GM12878 (cell line): ENCODE measurements at regions of chr12 and their contacts with region 1.

Region 1: DNA sequence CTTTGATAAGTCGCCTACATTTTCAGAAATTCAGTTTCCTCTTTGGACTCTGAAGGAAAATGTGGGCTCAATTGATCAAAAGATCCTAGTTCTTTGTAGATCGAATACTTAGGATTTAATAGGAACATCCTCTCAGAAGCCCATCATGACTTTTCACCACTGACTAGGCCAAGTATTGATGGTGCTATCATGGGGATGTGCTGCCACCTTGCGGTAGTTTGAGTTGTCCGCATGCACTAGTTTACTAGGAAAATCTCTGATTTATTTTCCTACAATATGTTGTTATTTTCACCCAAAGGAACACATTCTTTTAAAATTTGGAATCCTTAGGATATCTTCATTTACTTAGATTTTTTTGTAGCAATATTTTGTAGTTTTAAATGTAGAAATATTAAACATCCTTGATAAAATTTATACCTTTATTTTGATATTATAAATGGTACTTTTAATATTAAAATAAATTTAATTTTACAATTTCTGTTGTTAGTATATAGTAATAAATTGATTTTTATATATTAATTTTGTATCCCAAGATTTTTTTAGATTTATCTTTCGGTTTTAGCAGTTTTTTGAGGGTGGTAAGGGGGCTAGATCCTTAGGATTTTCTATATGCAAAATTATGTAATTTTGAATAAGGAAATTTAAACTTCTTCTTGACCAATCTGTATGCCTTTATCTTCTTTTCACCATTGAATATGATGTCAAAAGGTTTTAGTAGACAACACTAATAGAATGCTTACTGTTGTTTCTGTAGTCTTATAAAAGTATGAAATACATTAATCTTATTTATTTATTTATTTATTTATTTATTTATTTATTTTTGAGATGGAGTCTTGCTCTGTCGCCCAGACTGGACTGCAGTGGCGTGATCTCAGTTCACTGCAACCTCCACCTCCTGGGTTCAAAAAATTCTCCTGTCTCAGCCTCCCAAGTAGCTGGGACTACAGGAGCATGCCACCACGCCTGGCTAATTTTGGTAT is 52.9 kb upstream of the OR9K2 start:
- DNase-seq: peak; percentile 20
- ATAC-seq: peak; percentile 88
- H3K4me3 ChIP-seq: no peak overlapping the region
- H3K27ac ChIP-seq: no peak overlapping the region
- H3K4me1 ChIP-seq: no peaks in the 10 kb centered on the region
- H3K27me3 ChIP-seq: no peaks in the 10 kb centered on the region
- CTCF ChIP-seq: peak; percentile 72 to 91 (median 73)
- EP300 ChIP-seq: no peak
- POLR2A ChIP-seq: no peak
- RAD21 ChIP-seq: peak; percentile 97

Region 2: DNA sequence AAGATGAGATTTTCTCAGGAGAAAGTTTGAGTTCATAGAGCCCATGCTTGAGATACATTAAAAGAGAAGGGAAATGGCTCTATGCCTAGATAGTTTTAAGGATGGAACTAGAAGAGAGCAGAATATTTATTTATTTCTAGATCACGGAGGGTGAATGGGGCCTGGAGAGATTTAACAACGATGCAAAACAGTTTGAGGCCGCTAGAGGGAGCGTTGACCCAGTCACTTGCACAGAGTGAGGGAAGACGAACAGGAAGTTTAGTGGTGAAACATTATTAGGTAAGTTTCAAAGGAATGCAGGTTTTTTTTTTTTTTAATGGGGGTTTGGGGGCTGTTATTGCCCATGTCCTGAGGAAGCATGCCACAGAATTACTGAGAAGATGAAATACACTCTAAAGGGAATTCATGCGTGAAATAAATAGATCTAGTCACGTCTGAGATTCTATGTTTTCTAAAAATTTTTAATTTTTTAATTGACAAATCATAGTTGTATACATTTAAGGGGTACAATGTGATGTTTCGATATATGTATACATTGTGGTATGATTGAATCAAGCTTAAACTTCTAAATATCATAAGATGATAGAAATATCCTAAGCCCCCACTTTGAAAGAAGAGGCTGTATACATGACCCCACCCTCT is 470.0 kb before region 1 on chr12:
- CTCF ChIA-PET with region 1: interaction called, 5 read pairs
- POLR2A ChIA-PET with region 1: no interaction called
- RAD21 ChIA-PET with region 1: interaction called, 4 read pairs
- SMC1A ChIA-PET with region 1: interaction called, 3 read pairs
- in situ Hi-C with region 1: no loop called
- intact Hi-C with region 1: loop called (anchors 2 kb)
- DNase-seq: peak; percentile 21
- ATAC-seq: peak; percentile 99
- H3K4me3 ChIP-seq: no peak overlapping the region
- H3K27ac ChIP-seq: no peak overlapping the region
- H3K4me1 ChIP-seq: no peaks in the 10 kb centered on the region
- H3K27me3 ChIP-seq: no peaks in the 10 kb centered on the region; a peak in 1 of 4 replicates
- CTCF ChIP-seq: peak; percentile 81 to 92 (median 84)
- EP300 ChIP-seq: no peak
- POLR2A ChIP-seq: no peak
- RAD21 ChIP-seq: peak; percentile 78

Region 3: DNA sequence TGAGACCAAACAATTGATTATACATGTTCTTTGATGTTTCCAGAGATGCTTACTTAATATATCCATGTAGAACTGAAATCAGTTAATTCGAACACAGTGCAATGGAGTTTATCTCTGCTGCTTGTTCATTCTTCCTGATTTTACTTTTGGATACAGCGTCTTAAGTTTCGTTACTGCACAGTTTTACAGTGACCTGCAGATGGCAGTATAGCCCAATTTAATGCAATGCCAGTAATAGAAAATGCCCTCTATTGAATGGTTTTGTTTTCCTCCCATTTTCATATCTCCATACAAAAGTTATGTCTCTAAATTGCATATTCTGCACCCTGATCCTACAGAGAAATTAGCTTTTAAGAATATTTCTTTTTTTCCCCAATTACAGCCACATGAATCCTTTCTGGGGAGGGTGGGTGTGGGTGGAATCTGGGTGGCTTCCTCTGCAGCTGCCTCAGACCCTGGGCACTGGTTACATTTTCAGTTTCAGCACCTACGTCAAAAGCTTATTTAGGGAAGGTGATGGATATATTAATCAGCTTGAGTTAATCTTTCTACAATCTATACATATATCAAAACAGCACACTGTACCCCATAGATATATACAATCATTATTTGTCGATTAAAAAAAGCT is 324.0 kb before region 1 on chr12:
- CTCF ChIA-PET with region 1: interaction called, 135 read pairs
- POLR2A ChIA-PET with region 1: interaction called, 3 read pairs
- RAD21 ChIA-PET with region 1: interaction called, 34 read pairs
- SMC1A ChIA-PET with region 1: interaction called, 54 read pairs
- in situ Hi-C with region 1: no loop called
- intact Hi-C with region 1: loop called (anchors 1 kb)
- DNase-seq: peak; percentile 5
- ATAC-seq: peak; percentile 88
- H3K4me3 ChIP-seq: no peak overlapping the region
- H3K27ac ChIP-seq: no peak overlapping the region
- H3K4me1 ChIP-seq: no peaks in the 10 kb centered on the region
- H3K27me3 ChIP-seq: no peaks in the 10 kb centered on the region
- CTCF ChIP-seq: peak; percentile 62 to 86 (median 75)
- EP300 ChIP-seq: no peak
- POLR2A ChIP-seq: no peak
- RAD21 ChIP-seq: peak; percentile 84

Region 4: GRCh38 chr12:54853995-54854566 is 219.3 kb before region 1 on chr12 and contains the start of gene MUCL1:
- CTCF ChIA-PET with region 1: interaction called, 35 read pairs
- POLR2A ChIA-PET with region 1: no interaction called
- RAD21 ChIA-PET with region 1: interaction called, 14 read pairs
- SMC1A ChIA-PET with region 1: interaction called, 15 read pairs
- in situ Hi-C with region 1: loop called (anchors 5 kb)
- intact Hi-C with region 1: loop called (anchors 1 kb)
- DNase-seq: peak; percentile 28
- ATAC-seq: peak; percentile 100
- H3K4me3 ChIP-seq: no peak within 1 kb of the TSS
- H3K27ac ChIP-seq: no peak within 1 kb of the TSS
- H3K4me1 ChIP-seq: no peaks in the 10 kb centered on the region
- H3K27me3 ChIP-seq: no peaks in the 10 kb centered on the region
- CTCF ChIP-seq: peak; percentile 83 to 92 (median 89); a peak in 5 of 6 replicates
- EP300 ChIP-seq: no peak
- POLR2A ChIP-seq: no peak
- RAD21 ChIP-seq: peak; percentile 93
- polyA plus RNA-seq, gene MUCL1: not detected

Region 5: DNA sequence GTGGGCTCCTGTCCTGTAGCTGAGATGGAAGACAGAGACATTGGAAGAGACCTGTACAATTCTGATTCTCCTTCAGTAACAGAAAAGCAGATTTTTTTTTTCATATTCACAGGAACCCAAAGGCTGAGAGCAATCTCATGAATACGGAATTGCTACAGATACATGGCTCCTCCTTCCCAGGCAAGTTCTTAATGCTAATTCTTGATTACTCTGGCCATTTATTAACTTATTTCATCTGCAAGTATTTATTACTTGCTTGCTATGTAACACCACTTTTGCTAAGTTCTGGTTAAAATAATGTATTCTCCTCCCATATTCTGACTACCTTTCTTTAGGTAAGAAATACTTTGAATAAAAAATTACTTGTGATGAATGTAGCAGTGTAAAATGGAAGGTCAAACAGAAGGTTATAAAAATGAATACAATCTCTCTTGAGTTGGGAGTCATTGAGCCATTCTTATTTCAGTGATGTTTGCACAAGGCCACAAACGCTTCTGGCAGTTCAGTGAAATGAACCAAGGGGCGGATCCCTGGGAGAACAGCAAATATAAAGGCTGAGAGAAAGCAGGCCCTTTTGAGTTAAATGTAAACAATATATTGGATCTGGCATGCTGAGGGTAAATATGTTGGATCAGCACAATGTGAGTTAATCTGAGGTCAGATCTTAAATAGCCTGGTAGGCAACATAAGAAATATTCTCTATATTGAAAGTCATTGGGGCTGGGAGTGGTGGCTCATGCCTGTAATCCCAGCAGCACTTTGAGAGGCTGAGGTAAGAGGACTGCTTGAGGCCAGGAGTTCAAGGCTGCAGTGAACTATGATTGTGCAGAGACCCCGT is 181.4 kb before region 1 on chr12:
- CTCF ChIA-PET with region 1: no interaction called
- POLR2A ChIA-PET with region 1: no interaction called
- RAD21 ChIA-PET with region 1: no interaction called
- SMC1A ChIA-PET with region 1: no interaction called
- in situ Hi-C with region 1: no loop called
- intact Hi-C with region 1: no loop called
- DNase-seq: no peak
- ATAC-seq: no peak
- H3K4me3 ChIP-seq: no peak overlapping the region
- H3K27ac ChIP-seq: no peak overlapping the region
- H3K4me1 ChIP-seq: no peaks in the 10 kb centered on the region
- H3K27me3 ChIP-seq: no peaks in the 10 kb centered on the region
- CTCF ChIP-seq: no peak
- EP300 ChIP-seq: no peak
- POLR2A ChIP-seq: no peak
- RAD21 ChIP-seq: no peak

Region 6: GRCh38 chr12:54958048-54958658 is 115.2 kb before region 1 on chr12:
- CTCF ChIA-PET with region 1: interaction called, 28 read pairs
- POLR2A ChIA-PET with region 1: no interaction called
- RAD21 ChIA-PET with region 1: interaction called, 17 read pairs
- SMC1A ChIA-PET with region 1: interaction called, 21 read pairs
- in situ Hi-C with region 1: no loop called
- intact Hi-C with region 1: no loop called
- DNase-seq: peak; percentile 44
- ATAC-seq: peak; percentile 70
- H3K4me3 ChIP-seq: no peak overlapping the region
- H3K27ac ChIP-seq: no peak overlapping the region
- H3K4me1 ChIP-seq: peaks cover 19% of the 10 kb centered on the region
- H3K27me3 ChIP-seq: no peaks in the 10 kb centered on the region
- CTCF ChIP-seq: peak; percentile 47 to 84 (median 60); a peak in 4 of 6 replicates
- EP300 ChIP-seq: no peak
- POLR2A ChIP-seq: no peak
- RAD21 ChIP-seq: peak; percentile 88

Region 7: GRCh38 chr12:54998958-54999510 is 74.3 kb before region 1 on chr12:
- CTCF ChIA-PET with region 1: interaction called, 700 read pairs
- POLR2A ChIA-PET with region 1: interaction called, 8 read pairs
- RAD21 ChIA-PET with region 1: interaction called, 205 read pairs
- SMC1A ChIA-PET with region 1: interaction called, 429 read pairs
- in situ Hi-C with region 1: loop called (anchors 5 kb)
- intact Hi-C with region 1: no loop called
- DNase-seq: no peak
- ATAC-seq: no peak
- H3K4me3 ChIP-seq: no peak overlapping the region
- H3K27ac ChIP-seq: no peak overlapping the region
- H3K4me1 ChIP-seq: no peaks in the 10 kb centered on the region; the same call in 1 of the 2 replicates
- H3K27me3 ChIP-seq: no peaks in the 10 kb centered on the region
- CTCF ChIP-seq: no peak
- EP300 ChIP-seq: no peak
- POLR2A ChIP-seq: no peak
- RAD21 ChIP-seq: no peak